ENCODE measurements at regions of chr6 and their contacts with region 1.

Region 1: GRCh38 chr6:118551063-118552053 is 3.3 kb downstream of the PLN start:
- DNase-seq: peak; percentile 44
- H3K4me3 ChIP-seq: no peak overlapping the region
- H3K27ac ChIP-seq: no peak overlapping the region
- H3K27me3 ChIP-seq: no peaks in the 10 kb centered on the region
- CTCF ChIP-seq: peak; percentile 71

Region 2: DNA sequence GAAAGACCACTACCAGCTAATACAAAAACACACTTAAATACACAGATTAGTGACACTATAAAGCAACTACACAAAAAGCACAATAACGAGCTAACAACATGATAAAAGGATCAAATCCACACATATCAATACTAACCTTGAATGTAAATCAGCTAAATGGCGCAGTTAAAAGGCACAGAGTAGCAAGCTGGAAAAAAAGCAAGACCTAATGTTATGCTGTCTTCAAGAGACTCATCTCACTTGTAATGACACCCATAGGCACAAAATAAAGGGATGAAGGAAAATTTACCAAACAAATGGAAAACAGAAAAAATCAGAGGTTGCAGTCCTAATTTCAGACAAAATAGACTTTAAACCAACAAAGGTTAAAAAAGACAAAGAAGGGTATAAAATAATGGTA is 789.7 kb before region 1 on chr6:
- CTCF ChIA-PET with region 1: no interaction called
- POLR2A ChIA-PET with region 1: no interaction called
- DNase-seq: no peak
- H3K4me3 ChIP-seq: no peak overlapping the region
- H3K27ac ChIP-seq: no peak overlapping the region
- H3K27me3 ChIP-seq: no peaks in the 10 kb centered on the region
- CTCF ChIP-seq: no peak

Region 3: DNA sequence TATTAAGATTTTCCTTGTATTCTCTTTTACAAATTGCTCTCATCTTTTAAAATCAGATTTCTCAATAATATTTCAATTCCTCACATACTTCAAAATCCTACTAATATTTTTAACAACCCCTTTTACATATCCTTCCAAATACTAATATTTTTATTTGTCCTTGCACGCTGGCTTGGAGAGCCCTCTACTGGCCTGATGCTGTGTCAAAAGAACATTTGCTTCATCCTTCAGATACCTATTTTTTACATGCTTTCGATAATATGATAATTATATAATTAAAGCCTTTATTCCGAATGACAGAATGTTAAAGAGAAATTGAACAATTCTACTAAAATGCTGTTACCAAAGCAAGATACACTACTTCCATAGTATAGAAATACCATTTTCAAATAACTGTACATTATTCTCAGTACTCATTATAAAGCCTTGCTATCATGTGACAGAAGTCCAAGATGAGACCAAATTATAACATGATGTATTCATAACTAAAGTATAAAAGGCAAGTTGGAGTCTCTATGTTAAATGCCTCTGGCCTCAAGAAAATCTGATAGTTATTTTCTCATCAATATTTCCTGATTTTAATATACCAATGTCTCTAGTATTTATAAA is 42.2 kb before region 1 on chr6:
- CTCF ChIA-PET with region 1: interaction called, 11 read pairs
- POLR2A ChIA-PET with region 1: no interaction called
- DNase-seq: peak; percentile 4
- H3K4me3 ChIP-seq: no peak overlapping the region
- H3K27ac ChIP-seq: no peak overlapping the region
- H3K27me3 ChIP-seq: no peaks in the 10 kb centered on the region
- CTCF ChIP-seq: peak; percentile 89

Measured in AG04450 (cell line).